Activated CD4-positive, alpha-beta T cell treated with anti-CD3 and anti-CD28 coated beads for 36 hours (primary cell): ENCODE measurements at regions of chr10 and their contacts with region 1.

Region 1: GRCh38 chr10:95693668-95694534 is at the start of gene TCTN3:
- DNase-seq: peak; percentile 96
- ATAC-seq: peak; percentile 99
- H3K4me3 Mint-ChIP-seq: peak within 1 kb of the TSS; percentile 98
- H3K27ac Mint-ChIP-seq: peak within 1 kb of the TSS; percentile 92
- H3K4me1 Mint-ChIP-seq: peaks cover 37% of the 10 kb centered on the region
- H3K27me3 Mint-ChIP-seq: peaks cover 4% of the 10 kb centered on the region
- total RNA-seq, gene TCTN3: 19.4 to 20.0 TPM

Region 2: GRCh38 chr10:93702211-93703001 is 1991.5 kb before region 1 on chr10 and contains the start of gene FRA10AC1:
- CTCF ChIA-PET with region 1: no interaction called
- POLR2A ChIA-PET with region 1: no interaction called
- intact Hi-C with region 1: loop called (anchors 5 kb)
- DNase-seq: peak; percentile 93
- ATAC-seq: peak; percentile 84
- H3K4me3 Mint-ChIP-seq: no peak within 1 kb of the TSS
- H3K27ac Mint-ChIP-seq: no peak within 1 kb of the TSS
- H3K4me1 Mint-ChIP-seq: peaks cover 29% of the 10 kb centered on the region
- H3K27me3 Mint-ChIP-seq: no peaks in the 10 kb centered on the region
- total RNA-seq, gene FRA10AC1: 18.9 to 29.4 TPM

Region 3: GRCh38 chr10:95656291-95657164 is 37.4 kb before region 1 on chr10 and contains the start of gene ALDH18A1:
- CTCF ChIA-PET with region 1: interaction called, 21 read pairs
- POLR2A ChIA-PET with region 1: no interaction called
- intact Hi-C with region 1: loop called (anchors 1 kb)
- DNase-seq: peak; percentile 93
- ATAC-seq: peak; percentile 91
- H3K4me3 Mint-ChIP-seq: peak within 1 kb of the TSS; percentile 94
- H3K27ac Mint-ChIP-seq: peak within 1 kb of the TSS; percentile 99
- H3K4me1 Mint-ChIP-seq: peaks cover 26% of the 10 kb centered on the region
- H3K27me3 Mint-ChIP-seq: no peaks in the 10 kb centered on the region
- total RNA-seq, gene ALDH18A1: 117 to 120 TPM

Region 4: GRCh38 chr10:95864906-95865813 is 171.3 kb after region 1 on chr10:
- CTCF ChIA-PET with region 1: interaction called, 26 read pairs
- POLR2A ChIA-PET with region 1: no interaction called
- intact Hi-C with region 1: loop called in 1 of 2 experiments (anchors 1 kb)
- DNase-seq: peak; percentile 55
- ATAC-seq: peak; percentile 97
- H3K4me3 Mint-ChIP-seq: no peak overlapping the region
- H3K27ac Mint-ChIP-seq: peak overlapping the region; percentile 26
- H3K4me1 Mint-ChIP-seq: peaks cover 12% of the 10 kb centered on the region
- H3K27me3 Mint-ChIP-seq: no peaks in the 10 kb centered on the region

Region 5: DNA sequence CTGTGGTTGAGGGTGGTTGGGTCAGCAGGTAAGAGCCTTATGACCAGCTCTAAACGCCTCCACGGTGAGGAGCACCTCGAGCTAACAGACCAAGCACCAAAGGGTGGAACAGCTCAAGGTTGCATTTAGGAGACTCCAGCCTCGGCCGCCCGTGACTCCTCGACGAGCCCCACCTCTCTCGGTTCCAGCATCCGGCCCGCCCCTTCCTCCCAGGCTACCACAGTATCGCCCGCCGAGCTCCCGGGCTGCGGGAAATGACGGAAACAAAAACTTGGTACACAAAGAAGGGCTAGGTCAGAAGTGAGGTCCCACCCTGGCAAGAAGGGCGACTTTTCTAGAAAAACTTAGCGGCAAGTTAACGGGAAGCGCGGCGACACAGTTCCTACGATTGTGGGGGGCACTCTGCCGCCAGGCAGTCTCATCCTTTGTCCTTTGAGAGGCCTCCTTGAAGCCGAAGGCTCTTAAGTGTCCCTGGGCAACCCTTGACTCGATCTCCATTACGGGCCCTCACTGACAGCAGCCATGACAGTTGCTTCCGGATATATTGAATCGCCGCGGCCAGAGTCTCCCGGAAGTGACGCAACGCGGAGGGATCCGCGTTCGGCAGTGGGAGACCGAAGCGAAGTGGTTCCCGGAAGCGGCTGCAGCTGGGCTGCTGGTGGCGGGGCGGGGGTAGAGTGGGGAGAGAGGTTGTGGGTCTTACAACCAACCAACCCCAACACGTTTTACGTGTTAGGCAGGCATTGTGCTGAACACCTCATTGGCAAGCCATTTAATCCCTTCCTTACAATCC is 396.0 kb after region 1 on chr10:
- CTCF ChIA-PET with region 1: no interaction called
- POLR2A ChIA-PET with region 1: no interaction called
- intact Hi-C with region 1: loop called in 1 of 2 experiments (anchors 1 kb)
- DNase-seq: peak; percentile 95
- ATAC-seq: peak; percentile 91
- H3K4me3 Mint-ChIP-seq: peak overlapping the region; percentile 92
- H3K27ac Mint-ChIP-seq: peak overlapping the region; percentile 99
- H3K4me1 Mint-ChIP-seq: peaks cover 6% of the 10 kb centered on the region
- H3K27me3 Mint-ChIP-seq: peaks cover 15% of the 10 kb centered on the region

Region 6: DNA sequence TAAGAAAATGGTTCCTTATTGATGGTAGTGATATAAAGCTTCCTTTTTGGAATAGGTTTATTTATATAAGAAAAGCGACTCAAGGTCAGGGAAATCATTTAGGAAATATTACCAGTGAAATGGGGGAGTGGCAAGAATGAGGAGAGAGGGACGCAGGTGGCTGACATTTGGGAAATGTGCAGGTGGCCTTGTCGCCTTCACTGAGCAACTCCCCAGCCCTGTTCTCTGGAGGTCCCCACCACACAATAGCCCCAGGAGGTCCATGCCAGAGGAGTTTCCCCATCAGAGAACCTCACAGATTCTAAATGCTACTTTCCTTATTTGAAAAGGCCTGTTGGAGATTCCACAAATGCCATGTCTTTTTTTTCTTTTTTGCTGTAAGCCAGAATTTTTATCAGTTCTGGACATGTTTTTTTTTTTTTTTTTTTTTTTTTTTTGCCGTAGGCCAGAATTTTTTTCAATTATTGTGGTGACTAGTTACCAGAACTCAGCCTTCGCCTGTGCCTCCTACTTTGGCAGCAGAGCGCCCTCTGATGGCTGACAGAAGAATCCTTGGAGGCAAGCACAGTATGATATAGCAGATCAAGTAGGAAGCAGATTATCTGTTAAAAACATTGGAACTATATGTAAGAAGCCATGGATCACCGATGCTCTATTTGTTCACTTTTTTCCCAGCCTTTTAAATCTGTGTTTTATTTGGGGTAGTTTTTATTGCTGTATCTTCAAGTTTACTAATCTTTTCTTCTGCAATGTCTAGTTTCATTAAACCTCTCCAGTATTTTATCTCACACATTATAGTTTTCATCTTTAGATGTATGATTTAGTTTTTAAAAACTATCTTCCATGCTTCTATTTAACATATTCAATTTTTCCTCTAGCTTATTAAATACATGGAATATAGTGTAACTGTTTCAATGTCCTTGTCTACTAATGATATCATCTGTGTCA is 646.3 kb after region 1 on chr10:
- CTCF ChIA-PET with region 1: interaction called, 3 read pairs
- POLR2A ChIA-PET with region 1: no interaction called
- intact Hi-C with region 1: loop called in 1 of 2 experiments (anchors 10 kb)
- DNase-seq: peak; percentile 83
- ATAC-seq: peak; percentile 77
- H3K4me3 Mint-ChIP-seq: no peak overlapping the region
- H3K27ac Mint-ChIP-seq: no peak overlapping the region
- H3K4me1 Mint-ChIP-seq: peaks cover 9% of the 10 kb centered on the region
- H3K27me3 Mint-ChIP-seq: peaks cover 6% of the 10 kb centered on the region